ENCODE measurements at regions of chr14 and their contacts with region 1.

Region 1: DNA sequence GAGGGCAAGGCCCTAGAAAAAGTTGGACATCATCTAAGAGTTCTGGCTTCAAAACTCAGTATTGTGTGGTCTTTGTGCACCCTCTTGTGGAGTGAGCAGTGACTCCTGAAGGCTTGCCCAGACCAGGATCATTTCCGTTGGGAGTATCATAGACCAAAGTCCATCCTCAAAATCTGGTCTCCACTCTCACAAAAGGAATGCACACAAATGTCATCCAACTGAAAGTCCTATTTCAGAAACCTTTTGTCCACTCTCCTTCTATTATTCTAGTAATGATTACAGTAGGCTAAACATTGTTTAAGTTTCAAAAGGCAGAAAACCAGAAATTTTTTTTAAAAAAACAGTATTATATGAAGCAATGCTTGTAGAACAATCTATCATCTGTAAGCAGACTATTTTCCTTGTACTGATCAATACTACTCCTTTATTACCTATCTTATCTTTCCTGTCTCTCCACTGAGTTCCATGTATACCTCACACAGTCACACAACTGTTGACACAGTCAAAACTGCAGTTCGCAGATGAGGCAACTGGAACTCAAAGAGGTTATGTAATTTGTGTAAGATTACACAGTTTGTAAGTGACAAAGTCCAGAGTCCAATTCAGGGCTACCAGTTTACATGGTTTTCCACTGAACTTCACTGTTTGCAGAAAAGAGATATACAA is 41.4 kb downstream of the COX16 start:
- DNase-seq: peak; percentile 22 to 43
- H3K4me3 ChIP-seq: no peak overlapping the region
- H3K27ac ChIP-seq: no peak overlapping the region
- H3K4me1 ChIP-seq: no peaks in the 10 kb centered on the region
- H3K27me3 ChIP-seq: peaks cover 40% of the 10 kb centered on the region
- CTCF ChIP-seq: peak; percentile 61

Region 2: GRCh38 chr14:69812714-69813113 is 505.4 kb before region 1 on chr14:
- CTCF ChIA-PET with region 1: no interaction called
- POLR2A ChIA-PET with region 1: no interaction called
- intact Hi-C with region 1: no loop called
- DNase-seq: peak in 1 of 2 experiments; percentile 7
- H3K4me3 ChIP-seq: no peak overlapping the region
- H3K27ac ChIP-seq: no peak overlapping the region
- H3K4me1 ChIP-seq: no peaks in the 10 kb centered on the region
- H3K27me3 ChIP-seq: peaks cover 46% of the 10 kb centered on the region
- CTCF ChIP-seq: 0 out of 2 replicates have a peak, but pooled peaks have one; percentile 23

Region 3: GRCh38 chr14:69827560-69827959 is 490.5 kb before region 1 on chr14:
- CTCF ChIA-PET with region 1: no interaction called
- POLR2A ChIA-PET with region 1: no interaction called
- intact Hi-C with region 1: loop called (anchors 10 kb)
- DNase-seq: peak in 1 of 2 experiments; percentile 60
- H3K4me3 ChIP-seq: no peak overlapping the region
- H3K27ac ChIP-seq: no peak overlapping the region
- H3K4me1 ChIP-seq: no peaks in the 10 kb centered on the region
- H3K27me3 ChIP-seq: no peaks in the 10 kb centered on the region
- CTCF ChIP-seq: no peak

Region 4: DNA sequence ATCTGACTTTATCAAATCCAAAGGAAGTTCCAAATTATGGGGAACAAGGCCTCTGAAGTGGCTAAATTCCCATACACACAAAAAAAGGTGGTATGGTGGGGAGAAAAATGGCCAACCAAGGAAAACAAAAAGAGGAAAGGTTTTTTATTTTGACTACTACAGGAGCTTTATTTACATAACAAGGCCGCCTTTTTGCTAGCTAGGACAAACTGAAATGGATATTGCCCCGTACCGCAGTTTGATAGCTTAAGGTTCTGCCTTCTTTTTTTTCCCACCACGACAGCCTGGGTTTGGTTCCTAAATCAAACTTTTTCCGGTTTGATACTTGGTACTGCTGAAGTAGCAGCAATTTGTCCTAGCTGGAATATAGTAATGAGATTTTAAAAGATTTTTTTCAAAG is 25.4 kb before region 1 on chr14:
- CTCF ChIA-PET with region 1: no interaction called
- POLR2A ChIA-PET with region 1: no interaction called
- intact Hi-C with region 1: no loop called
- DNase-seq: no peak
- H3K4me3 ChIP-seq: no peak overlapping the region
- H3K27ac ChIP-seq: no peak overlapping the region
- H3K4me1 ChIP-seq: no peaks in the 10 kb centered on the region
- H3K27me3 ChIP-seq: peaks cover 96% of the 10 kb centered on the region
- CTCF ChIP-seq: no peak